RWPE1 (cell line): ENCODE measurements at regions of chr5 and their contacts with region 1.

Region 1: GRCh38 chr5:138732466-138732865 is 20.8 kb upstream of the CTNNA1 start:
- DNase-seq: no peak
- H3K27ac ChIP-seq: no peak overlapping the region
- CTCF ChIP-seq: no peak

Region 2: GRCh38 chr5:138610918-138611677 is 121.4 kb before region 1 on chr5:
- CTCF ChIA-PET with region 1: no interaction called
- POLR2A ChIA-PET with region 1: no interaction called
- DNase-seq: no peak
- H3K27ac ChIP-seq: no peak overlapping the region
- CTCF ChIP-seq: no peak

Region 3: GRCh38 chr5:138668376-138669079 is 63.9 kb before region 1 on chr5:
- CTCF ChIA-PET with region 1: interaction called, 12 read pairs
- POLR2A ChIA-PET with region 1: no interaction called
- DNase-seq: no peak
- H3K27ac ChIP-seq: no peak overlapping the region
- CTCF ChIP-seq: no peak